ENCODE measurements at regions of chr10 and their contacts with region 1.

Region 1: DNA sequence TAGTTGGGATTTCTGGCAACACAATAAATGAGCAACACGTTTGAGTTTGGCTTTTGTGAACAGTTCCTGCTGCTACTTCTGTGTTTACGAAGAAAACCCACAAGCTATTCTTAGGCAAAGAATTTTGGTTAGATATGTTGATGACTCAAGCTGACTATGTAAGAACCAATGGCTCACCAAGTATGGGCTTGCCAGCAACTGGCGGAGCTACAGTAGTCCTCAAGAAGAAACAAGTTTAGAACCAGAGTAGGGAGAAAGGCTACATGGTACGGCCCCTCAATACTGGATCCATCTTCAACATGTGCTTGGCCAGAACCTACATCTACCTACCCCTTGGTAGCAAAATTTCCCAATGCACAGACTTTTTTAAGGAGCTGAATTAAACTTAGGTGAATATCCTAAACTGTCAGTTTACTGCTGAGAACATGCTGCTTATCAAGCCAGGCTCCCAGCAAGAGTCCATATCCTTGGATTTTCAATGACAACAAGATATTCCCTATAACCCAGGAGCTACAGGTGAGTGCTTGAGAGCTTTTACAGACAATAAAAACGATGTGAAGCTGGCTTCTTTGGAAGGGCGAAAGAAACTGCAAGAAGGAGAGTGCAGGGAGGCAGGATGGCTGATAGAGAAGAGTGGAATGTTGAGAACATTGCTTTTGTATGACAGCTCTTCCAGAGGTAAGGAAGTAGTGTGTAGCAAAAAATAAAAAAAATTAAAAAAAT is 74.3 kb upstream of the ASAH2 start:
- DNase-seq: peak; percentile 76
- H3K4me3 ChIP-seq: no peak overlapping the region
- H3K27ac ChIP-seq: peak overlapping the region; percentile 28 to 46
- H3K4me1 ChIP-seq: no peaks in the 10 kb centered on the region
- H3K27me3 ChIP-seq: no peaks in the 10 kb centered on the region
- CTCF ChIP-seq: no peak
- POLR2A ChIP-seq: no peak

Region 2: DNA sequence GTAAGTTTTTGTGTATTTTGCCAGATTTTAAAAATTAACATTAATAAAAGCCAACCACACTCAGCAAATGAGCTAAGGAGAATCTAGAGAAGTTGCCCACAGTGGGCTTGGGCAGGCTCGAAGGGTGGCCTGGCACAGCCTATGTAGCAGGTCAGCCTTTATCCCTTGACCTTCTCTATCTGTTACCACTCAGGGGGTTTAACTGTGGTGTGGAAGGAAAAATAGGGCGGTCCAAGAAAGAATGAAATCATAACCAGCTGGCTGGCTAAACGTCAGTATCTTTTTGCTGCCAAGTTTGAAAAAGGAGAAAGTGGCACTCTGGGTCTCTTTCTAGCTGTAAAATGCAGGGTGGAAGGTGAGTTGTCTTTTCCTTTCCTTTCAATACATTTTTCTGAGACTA is 56.0 kb after region 1 on chr10:
- intact Hi-C with region 1: loop called (anchors 5 kb)
- DNase-seq: no peak
- H3K4me3 ChIP-seq: no peak overlapping the region
- H3K27ac ChIP-seq: no peak overlapping the region
- H3K4me1 ChIP-seq: no peaks in the 10 kb centered on the region
- H3K27me3 ChIP-seq: no peaks in the 10 kb centered on the region
- CTCF ChIP-seq: no peak
- POLR2A ChIP-seq: no peak

Region 3: GRCh38 chr10:50614444-50615137 is 289.0 kb after region 1 on chr10:
- intact Hi-C with region 1: loop called (anchors 10 kb)
- DNase-seq: no peak
- H3K4me3 ChIP-seq: no peak overlapping the region
- H3K27ac ChIP-seq: no peak overlapping the region
- H3K4me1 ChIP-seq: peaks cover 5% of the 10 kb centered on the region
- H3K27me3 ChIP-seq: no peaks in the 10 kb centered on the region
- CTCF ChIP-seq: peak in 1 of 4 experiments; percentile 26
- POLR2A ChIP-seq: no peak